T-cell (primary cell): ENCODE measurements at regions of chr7 and their contacts with region 1.

Region 1: DNA sequence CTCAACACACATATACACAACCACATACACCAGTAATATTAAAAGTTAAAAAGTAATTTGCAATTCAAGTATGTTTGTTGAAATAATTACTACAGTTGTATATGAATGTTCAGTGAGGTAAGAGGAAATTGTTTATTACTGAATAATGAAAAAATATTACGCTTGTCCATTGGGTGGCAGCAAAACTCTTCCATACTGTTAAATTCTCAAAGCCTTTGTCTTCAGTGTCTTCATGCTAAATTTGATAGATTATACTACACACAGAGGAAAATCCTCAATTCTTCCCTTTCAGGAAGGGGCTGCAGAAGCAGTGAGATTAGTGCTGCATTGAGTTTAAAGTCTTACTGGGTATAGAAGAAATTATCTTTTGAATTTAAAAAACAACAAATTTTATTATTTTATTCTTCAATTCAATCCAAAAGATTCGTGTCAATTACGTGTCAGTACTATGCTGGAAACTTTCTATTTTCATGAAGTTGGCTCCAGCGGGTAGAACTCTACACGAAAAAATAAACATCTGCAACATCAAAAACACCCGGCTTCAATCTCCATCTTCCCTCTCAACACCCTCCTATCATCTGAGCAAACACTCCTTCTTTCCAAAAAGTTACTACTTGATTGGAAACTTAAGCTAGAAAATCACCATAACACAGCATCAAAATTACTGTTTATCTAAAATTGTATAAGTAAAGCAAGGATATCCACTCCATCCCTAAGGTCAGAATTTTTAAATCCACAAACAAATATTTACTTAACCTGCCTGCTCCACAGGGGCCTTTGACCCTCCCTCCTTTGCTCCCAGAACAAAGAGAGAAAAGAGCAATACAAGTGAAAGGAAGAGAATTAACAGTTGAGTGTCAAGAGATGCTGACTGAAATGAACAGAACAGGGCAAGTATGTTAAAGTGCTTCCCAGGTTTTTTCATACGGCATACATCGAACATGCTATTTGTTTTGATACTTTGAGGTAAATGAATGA is 37.0 kb upstream of the TES start:
- DNase-seq: peak in 12 of 35 experiments; percentile 8 to 76 (median 18)
- ATAC-seq: peak in 2 of 4 experiments; percentile 56 to 61
- H3K4me3 ChIP-seq: no peak overlapping the region
- H3K4me3 Mint-ChIP-seq: no peak overlapping the region
- H3K27ac ChIP-seq: no peak overlapping the region
- H3K27ac Mint-ChIP-seq: no peak overlapping the region
- H3K4me1 ChIP-seq: no peaks in the 10 kb centered on the region
- H3K4me1 Mint-ChIP-seq: no peaks in the 10 kb centered on the region
- H3K27me3 ChIP-seq: no peaks in the 10 kb centered on the region
- H3K27me3 Mint-ChIP-seq: peaks cover 4 to 8% of the 10 kb centered on the region in 2 donors

Region 2: DNA sequence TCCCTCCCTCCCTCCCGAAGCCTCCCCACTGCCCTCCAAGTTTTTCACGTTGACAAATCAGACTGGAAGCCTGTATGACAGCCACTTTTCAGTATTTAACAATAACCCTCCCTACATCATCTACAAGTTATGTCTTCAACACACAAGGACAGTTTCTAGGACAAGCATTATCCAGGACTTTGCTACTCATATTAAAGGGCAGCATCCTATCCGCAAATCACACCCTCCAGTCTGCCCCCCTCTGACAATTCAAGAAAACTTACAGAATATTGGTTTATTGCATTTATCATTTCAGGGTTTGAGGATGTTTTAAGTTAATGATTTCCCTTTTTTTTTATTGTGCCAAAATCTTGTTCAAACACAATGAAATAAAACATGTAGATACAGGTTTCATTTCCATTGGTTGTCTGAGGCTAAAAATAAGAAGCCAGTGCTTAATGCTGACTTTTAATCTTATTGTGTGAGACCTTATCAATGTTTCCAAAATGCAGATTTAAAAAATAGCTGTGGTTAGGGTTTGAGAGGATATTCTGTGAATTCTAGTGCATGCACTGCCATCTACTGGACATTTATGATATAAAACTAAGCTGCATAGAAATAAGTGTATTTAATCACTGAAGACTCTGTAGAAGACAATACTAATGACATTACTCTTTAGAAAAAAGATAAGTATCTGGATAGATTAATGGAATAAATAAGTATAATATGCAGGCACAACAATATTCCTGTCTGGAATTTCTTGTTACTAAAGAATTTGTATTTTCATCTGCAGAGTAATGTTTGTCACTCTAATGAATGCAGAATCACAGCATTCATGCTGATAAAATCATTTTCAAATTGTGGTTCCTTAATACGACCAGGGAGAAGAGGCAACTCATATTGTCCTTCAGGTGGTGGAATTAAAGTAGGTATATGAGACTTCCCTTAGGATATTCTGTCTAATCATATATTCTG is 415.6 kb after region 1 on chr7:
- CTCF ChIA-PET with region 1: interaction called, 13 to 23 read pairs
- POLR2A ChIA-PET with region 1: no interaction called
- DNase-seq: peak in 1 of 35 experiments; percentile 64
- ATAC-seq: peak in 3 of 4 experiments; percentile 20 to 50 (median 43)
- H3K4me3 ChIP-seq: no peak overlapping the region
- H3K4me3 Mint-ChIP-seq: no peak overlapping the region
- H3K27ac ChIP-seq: no peak overlapping the region
- H3K27ac Mint-ChIP-seq: no peak overlapping the region
- H3K4me1 ChIP-seq: peaks cover 0 to 7% of the 10 kb centered on the region in 2 experiments
- H3K4me1 Mint-ChIP-seq: peaks cover 20 to 23% (median 20%) of the 10 kb centered on the region in 3 donors
- H3K27me3 ChIP-seq: peaks cover 0 to 8% of the 10 kb centered on the region in 2 experiments
- H3K27me3 Mint-ChIP-seq: peaks cover 22 to 25% of the 10 kb centered on the region in 2 donors